Activated CD8-positive, alpha-beta T cell treated with anti-CD3 and anti-CD28 coated beads, Interleukin-2, amount 10 ng/mL, durations not matched to agents 7 days and 5 days (primary cell): ENCODE measurements at regions of chr12 and their contacts with region 1.

Region 1: GRCh38 chr12:48197971-48198671 is 5.0 kb downstream of the OR10AD1 start:
- DNase-seq: peak; percentile 95
- ATAC-seq: peak; percentile 98
- H3K4me3 Mint-ChIP-seq: peak overlapping the region; percentile 76
- H3K27ac Mint-ChIP-seq: peak overlapping the region; percentile 97
- H3K4me1 Mint-ChIP-seq: peaks cover 42% of the 10 kb centered on the region
- H3K27me3 Mint-ChIP-seq: peaks cover 17% of the 10 kb centered on the region

Region 2: DNA sequence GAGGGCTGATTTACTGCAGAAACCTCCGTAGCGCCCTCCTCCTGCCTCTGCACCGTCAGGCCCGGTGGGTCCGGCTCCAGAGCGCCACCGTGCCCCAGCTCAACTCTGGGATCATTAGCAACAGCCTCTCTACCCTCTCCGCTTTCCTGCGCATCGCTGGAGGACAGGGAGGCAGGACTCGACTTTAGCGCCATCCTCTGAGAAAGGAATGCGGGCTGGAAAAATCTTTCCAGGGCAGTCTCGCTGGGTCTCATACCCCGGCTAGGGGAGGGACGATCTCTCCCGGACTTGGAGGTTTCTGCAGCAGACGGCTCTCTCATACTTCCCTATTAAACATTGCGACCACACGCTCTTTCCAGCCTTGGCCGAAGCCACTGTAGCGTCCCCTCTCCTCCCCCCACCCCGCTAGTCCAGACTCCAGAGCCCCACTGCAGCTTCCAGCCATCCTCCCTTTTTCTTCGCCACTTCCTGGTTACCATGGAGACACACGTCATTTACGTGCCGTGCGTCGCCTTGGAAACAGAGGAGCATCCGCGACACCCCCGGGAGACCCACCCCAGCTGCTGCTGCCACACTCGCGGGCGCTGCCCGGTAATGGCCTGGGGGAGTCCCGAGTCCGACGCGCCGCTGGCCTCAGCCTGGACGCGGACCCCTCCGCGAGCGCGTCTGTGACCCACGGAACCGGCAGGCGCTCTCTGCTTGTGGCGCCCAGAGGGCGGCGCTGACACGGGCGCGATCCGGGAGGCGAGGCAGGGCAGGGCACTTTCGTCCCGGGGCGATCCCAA is 14.8 kb before region 1 on chr12 and contains the start of gene CCDC184:
- CTCF ChIA-PET with region 1: interaction called, 79 read pairs
- POLR2A ChIA-PET with region 1: interaction called, 8 read pairs
- DNase-seq: peak; percentile 78
- ATAC-seq: peak; percentile 78
- H3K4me3 Mint-ChIP-seq: peak within 1 kb of the TSS; percentile 89
- H3K27ac Mint-ChIP-seq: peak within 1 kb of the TSS; percentile 41
- H3K4me1 Mint-ChIP-seq: peaks cover 13% of the 10 kb centered on the region
- H3K27me3 Mint-ChIP-seq: peaks cover 72% of the 10 kb centered on the region
- total RNA-seq, gene CCDC184: 1.4 to 1.5 TPM

Region 3: DNA sequence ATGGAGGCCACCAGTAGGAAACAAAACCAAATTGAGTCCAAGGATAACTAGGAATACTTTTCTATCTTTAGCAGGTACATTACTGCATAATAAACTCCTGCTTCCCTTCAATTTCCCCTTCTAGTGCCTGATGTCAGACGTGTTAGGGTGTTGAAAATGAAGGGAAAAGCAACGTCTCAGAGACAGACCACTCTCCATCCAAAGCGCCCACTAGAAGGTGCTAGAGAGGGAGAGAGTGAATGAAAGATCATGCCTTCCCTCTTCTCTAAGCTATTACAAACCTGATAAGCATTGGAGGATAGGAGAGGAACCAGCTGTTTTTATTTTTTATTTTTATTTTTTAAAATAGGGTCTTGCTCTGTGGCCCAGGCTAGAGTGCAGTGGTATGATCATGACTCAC is 88.5 kb after region 1 on chr12:
- CTCF ChIA-PET with region 1: interaction called, 16 read pairs
- POLR2A ChIA-PET with region 1: interaction called, 3 read pairs
- DNase-seq: no peak
- ATAC-seq: peak; percentile 36
- H3K4me3 Mint-ChIP-seq: no peak overlapping the region
- H3K27ac Mint-ChIP-seq: peak overlapping the region; percentile 92
- H3K4me1 Mint-ChIP-seq: peaks cover 16% of the 10 kb centered on the region
- H3K27me3 Mint-ChIP-seq: peaks cover 10% of the 10 kb centered on the region

Region 4: DNA sequence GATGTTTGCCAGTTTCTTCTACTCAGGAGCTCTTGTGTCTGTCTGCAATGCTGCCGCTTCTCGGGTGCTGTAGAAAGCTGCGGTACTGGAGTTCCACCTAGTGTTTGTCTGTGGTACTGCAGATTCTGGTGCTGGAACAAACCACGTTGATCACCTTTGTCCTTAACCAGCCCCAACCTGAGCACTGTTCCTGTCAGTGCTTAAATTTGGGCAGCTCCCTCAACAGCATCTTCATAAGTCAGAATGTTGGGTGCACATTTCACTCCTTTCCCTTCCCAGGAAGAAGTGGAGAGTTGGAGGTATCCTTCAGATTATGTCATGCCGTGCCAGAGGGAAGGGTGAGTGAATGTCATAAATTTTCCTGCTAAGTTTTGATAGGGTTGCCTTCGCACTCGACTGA is 420.4 kb after region 1 on chr12:
- CTCF ChIA-PET with region 1: interaction called, 15 read pairs
- POLR2A ChIA-PET with region 1: no interaction called
- DNase-seq: peak; percentile 87
- ATAC-seq: peak; percentile 92
- H3K4me3 Mint-ChIP-seq: no peak overlapping the region
- H3K27ac Mint-ChIP-seq: no peak overlapping the region
- H3K4me1 Mint-ChIP-seq: no peaks in the 10 kb centered on the region
- H3K27me3 Mint-ChIP-seq: peaks cover 23% of the 10 kb centered on the region